RWPE1 (cell line): ENCODE measurements at regions of chr11 and their contacts with region 1.

Region 1: DNA sequence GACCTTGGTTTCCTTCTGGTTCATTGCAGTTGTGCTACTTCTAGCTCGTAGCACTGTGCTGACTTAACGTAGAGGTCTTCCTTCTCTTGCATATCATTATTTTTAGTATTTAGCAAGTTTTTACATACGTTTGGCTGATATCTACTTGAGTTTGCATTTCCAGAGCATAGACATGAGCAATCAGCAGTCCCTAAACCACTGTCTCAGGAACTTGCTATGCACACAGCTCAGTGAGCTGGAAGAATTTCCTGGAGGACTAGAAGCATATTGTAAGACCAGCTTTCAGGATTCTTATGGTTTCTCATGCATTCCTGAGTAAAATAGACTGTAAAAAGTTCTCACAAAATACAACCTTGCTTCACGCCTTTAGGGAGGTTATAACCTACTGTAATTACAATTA is 226.7 kb upstream of the PDGFD start:
- DNase-seq: no peak
- H3K27ac ChIP-seq: no peak overlapping the region
- CTCF ChIP-seq: no peak

Region 2: DNA sequence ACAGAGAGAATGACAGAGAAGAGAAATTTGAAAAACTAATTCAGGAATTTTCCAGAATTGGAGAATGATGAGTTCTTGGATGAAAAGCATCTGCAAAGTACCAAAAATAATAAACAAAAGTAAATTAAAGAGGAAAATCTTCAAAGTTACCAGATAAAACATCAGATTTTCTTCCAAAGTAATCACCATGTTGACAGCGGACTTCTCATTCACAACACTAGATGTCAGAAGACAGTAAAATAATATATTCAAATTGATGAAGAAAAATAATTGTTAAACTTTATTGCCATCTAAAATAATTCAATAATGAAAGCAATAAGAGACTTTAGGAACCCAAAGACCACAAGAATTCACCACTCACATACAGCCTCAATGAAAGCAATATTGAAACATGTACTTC is 926.2 kb before region 1 on chr11:
- CTCF ChIA-PET with region 1: interaction called, 10 read pairs
- POLR2A ChIA-PET with region 1: no interaction called
- DNase-seq: no peak
- H3K27ac ChIP-seq: no peak overlapping the region
- CTCF ChIP-seq: no peak